Mucosa of descending colon (tissue), 3 donors: ENCODE measurements at regions of chr3 and their contacts with region 1.

Region 1: GRCh38 chr3:179558742-179559364 is 3.9 kb upstream of the ACTL6A start:
- DNase-seq: peak in 2 of 3 donors; percentile 63 to 64
- ATAC-seq: no peak
- H3K4me3 ChIP-seq: no peak overlapping the region
- H3K4me1 ChIP-seq: no peaks in the 10 kb centered on the region
- CTCF ChIP-seq: peak; percentile 33

Region 2: DNA sequence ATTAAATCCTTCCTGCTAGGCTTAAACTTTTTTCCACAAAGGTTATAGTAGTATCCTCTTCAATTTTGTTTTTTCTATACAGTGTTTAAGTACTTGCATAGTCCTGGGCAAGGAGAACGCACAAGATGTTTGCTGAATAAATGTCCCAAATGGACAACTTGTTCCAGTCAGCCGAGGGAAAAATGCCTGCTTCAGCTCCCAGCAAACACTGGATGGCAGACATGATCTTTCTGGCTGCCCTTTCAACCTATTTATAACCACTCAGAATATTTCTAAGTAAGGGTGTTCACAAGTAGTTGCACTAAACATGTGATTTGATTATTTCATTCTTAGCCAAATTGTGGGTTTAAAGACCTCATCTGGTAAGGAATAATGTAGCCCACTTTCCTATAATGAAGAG is 137.4 kb before region 1 on chr3:
- intact Hi-C with region 1: loop called in 1 of 2 experiments (anchors 10 kb)
- DNase-seq: peak in 1 of 3 donors; percentile 9
- ATAC-seq: no peak
- H3K4me3 ChIP-seq: no peak overlapping the region
- H3K4me1 ChIP-seq: no peaks in the 10 kb centered on the region
- CTCF ChIP-seq: no peak